Mammary epithelial cell (primary cell): ENCODE measurements at regions of chr1 and their contacts with region 1.

Region 1: DNA sequence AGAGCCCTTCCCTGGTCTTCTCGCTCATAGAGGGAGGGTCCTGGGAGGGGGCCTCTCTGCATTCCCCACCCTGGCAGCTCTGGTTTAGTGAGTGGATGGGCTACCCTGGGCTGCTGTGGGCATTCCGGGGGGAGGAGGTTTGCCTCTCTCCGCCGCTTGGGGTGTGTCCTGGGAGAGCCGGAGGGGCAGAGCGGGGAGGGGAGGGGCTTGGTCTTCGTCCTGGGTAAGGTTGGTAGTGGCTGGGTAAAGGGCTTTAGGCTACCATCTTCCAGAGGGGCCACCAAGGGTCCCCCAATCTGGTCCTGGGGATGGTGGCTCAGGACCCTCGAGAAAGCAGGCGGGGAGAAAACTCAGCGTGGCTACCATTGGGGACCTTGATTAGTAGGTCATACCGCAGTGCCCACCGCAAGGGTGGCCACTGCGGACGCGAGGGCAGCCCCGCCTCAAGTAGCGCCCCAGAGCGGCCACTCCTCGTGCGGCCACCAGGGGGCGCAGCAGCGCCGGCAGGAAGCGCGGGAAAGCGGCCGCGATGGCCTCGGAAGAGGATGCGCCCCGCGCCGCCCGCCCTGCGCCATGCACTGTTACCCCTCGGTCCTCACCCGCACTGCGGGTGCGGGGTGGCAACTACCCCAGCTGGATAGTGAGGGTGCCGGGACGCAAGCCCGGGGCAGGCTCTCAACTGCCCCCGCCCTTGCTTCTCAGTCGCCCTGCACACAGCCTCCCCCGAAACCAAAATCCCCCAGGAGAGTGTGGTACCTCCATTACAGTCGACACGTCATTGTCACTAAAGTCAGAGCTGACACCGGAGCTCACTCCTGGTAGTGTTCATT is 44.1 kb upstream of the SLC25A33 start:
- DNase-seq: peak; percentile 14
- H3K4me3 ChIP-seq: no peak overlapping the region
- H3K27ac ChIP-seq: no peak overlapping the region
- H3K4me1 ChIP-seq: no peaks in the 10 kb centered on the region
- H3K27me3 ChIP-seq: no peaks in the 10 kb centered on the region
- CTCF ChIP-seq: peak; percentile 54 to 91

Region 2: DNA sequence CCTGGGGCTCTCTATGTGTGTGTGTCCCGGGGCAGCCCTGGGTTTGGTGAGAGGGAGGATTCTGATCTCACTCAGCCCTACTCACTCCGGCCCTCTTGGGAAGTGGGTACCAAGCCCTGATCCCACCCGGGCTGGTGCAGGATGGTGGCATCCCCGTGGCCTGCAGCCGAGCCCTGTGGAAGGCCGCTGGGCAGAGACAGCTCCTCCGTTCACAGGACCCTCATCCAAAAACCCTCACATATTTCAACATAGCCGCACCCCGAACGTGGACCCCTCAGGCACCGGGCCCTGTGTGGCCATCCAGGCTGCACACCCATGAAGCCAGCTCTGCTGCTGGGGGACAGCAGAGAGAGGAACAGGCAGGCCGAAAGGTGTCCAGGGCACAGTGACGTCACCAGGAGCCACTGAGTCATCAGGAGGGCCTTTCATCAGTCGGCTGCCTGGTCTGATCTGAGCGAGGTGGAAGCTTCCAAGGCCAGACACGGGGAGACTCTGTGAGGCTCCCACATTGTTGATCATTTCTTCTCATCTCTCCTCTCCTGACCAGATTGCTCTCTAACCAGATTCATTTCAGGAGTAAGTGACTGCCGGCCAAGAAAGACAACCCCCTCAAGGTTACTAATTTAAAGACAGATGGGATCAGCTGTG is 350.0 kb before region 1 on chr1:
- CTCF ChIA-PET with region 1: interaction called, 3 read pairs
- dilution Hi-C with region 1: no loop called
- in situ Hi-C with region 1: no loop called
- intact Hi-C with region 1: loop called (anchors 2 kb)
- DNase-seq: peak; percentile 23
- H3K4me3 ChIP-seq: no peak overlapping the region
- H3K27ac ChIP-seq: no peak overlapping the region
- H3K4me1 ChIP-seq: peaks cover 5% of the 10 kb centered on the region
- H3K27me3 ChIP-seq: no peaks in the 10 kb centered on the region
- CTCF ChIP-seq: no peak

Region 3: DNA sequence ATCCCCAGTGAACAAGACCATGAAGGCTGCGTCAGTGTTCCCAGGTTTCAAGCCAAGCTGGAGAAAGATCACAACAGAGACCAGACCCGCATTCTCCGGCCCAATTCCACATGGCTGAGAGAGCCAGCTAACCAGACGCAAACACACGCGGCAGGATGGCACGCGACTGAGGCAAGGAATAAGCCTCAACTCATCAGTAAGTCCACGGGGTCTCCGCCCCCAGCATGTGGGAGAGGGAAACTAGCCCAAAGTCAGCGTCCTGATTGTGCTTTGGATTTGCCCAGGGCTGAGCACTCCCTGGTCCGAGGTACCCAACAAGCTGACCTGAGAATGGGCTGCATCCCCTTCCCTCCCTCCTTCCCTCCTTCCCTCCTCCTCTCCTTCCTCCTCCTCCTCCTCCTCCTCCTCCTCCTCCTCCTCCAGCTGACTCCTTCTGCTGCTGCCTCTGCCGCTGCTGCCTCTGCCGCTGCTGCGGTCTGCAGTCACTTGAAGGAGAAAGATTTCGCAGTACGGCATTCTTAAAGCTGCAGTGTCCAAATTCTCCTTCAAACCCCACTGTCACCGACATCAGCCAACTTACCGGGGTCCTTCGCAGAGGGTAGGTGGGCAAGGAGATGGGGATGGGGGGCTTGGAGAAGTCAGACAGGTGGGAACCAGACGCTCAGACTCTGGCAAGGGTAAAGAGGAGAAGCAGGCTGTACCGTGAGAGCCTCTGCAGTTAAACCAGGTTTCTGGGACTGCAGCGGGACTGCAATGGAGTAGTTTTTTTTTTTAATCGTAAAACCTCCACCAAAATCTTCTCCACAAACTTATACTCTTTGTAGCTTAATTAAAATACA is 293.5 kb before region 1 on chr1:
- CTCF ChIA-PET with region 1: no interaction called
- dilution Hi-C with region 1: no loop called
- in situ Hi-C with region 1: no loop called
- intact Hi-C with region 1: loop called (anchors 5 kb)
- DNase-seq: peak; percentile 41
- H3K4me3 ChIP-seq: peak overlapping the region; percentile 54 to 61 (median 54)
- H3K27ac ChIP-seq: no peak overlapping the region
- H3K4me1 ChIP-seq: peaks cover 54% of the 10 kb centered on the region
- H3K27me3 ChIP-seq: no peaks in the 10 kb centered on the region
- CTCF ChIP-seq: no peak

Region 4: GRCh38 chr1:9292361-9293240 is 202.5 kb before region 1 on chr1 and contains the start of gene SPSB1:
- CTCF ChIA-PET with region 1: interaction called, 7 read pairs
- dilution Hi-C with region 1: no loop called
- in situ Hi-C with region 1: loop called in 1 of 2 experiments (anchors 5 kb)
- intact Hi-C with region 1: loop called (anchors 1 kb)
- DNase-seq: peak; percentile 73
- H3K4me3 ChIP-seq: peak within 1 kb of the TSS; percentile 53 to 96 (median 74)
- H3K27ac ChIP-seq: peak within 1 kb of the TSS; percentile 63
- H3K4me1 ChIP-seq: peaks cover 32% of the 10 kb centered on the region
- H3K27me3 ChIP-seq: no peaks in the 10 kb centered on the region
- CTCF ChIP-seq: no peak
- total RNA-seq, gene SPSB1: 18.2 to 56.7 TPM

Region 5: DNA sequence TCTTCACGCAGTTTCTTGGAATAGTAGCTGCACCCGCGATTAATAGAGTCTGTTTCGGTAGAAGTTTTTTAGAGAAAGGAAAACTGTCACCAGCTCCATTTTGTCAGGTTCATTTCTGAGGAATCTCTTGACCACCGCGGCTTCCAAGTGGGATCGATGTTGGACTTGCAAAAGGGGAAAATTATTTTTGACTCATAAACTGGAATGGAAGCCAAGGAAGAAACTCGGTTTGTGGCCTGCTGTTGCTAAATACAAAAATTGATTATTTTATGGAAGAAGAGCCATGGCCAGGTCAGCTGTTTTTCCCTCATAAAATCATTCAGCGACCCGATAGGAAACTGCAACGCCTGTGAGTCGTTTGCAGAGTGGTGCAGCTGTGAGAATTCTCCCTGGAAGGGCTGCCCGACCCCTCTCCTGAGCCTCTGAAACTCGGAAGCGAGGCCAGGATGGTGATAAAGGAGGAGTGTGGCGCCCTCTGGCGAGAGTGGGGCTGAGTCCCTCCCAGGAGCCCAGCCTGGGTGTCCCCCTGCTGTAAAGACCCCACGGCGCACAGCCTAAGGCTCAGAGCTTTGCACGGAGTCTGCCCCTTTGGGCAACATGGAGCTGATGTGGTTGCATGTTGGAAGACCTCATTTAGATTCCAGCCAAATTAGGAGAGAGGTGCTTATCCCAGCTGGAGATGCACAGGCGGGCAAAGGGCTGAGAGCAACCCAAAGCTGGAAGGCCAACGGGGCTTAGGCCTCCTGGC is 39.5 kb before region 1 on chr1:
- CTCF ChIA-PET with region 1: no interaction called
- dilution Hi-C with region 1: no loop called
- in situ Hi-C with region 1: no loop called
- intact Hi-C with region 1: loop called (anchors 1 kb)
- DNase-seq: peak; percentile 24
- H3K4me3 ChIP-seq: no peak overlapping the region
- H3K27ac ChIP-seq: no peak overlapping the region
- H3K4me1 ChIP-seq: peaks cover 4% of the 10 kb centered on the region
- H3K27me3 ChIP-seq: no peaks in the 10 kb centered on the region
- CTCF ChIP-seq: peak; percentile 61 to 91

Region 6: DNA sequence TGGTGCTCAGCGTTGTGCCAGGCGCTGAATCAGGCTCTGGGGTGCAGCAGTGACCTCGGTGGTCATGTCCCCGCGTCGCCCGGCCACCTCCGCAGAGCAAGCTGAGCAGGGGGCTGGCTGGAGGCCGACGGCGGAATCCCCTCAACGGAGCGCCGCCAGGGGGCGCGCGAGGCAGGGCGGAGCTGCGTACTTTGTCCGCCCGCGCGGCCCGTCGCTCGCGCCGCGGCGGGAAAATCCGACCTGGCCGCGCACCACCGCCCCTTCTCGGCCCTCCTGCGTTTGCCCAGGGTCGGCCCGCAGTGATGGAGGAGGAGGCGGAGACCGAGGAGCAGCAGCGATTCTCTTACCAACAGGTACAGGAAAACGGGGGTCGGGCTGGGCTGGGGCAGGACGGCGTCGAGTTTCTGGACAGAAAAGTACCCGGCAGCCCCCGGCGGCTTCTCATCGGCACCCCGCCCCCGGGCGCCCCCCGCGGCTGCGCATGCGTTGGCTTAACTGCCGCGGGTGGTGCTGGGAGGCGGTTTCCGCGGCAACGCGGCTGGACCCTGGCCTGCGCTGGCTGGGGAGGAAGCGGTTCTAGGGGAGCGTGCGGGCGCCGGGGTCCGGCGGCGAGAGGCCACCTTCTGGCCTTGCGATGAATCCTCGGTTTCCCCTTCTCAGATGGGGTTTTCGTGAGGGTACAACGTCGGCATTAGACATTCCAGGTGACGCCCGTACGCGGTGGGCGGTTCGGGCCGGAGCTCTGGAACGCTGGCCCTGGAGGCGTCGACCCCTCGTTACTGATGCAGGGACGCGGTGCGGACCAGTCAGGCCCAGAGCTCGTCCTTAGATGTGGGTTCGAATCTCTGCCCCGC is 935.3 kb after region 1 on chr1 and contains the start of gene CENPS:
- CTCF ChIA-PET with region 1: no interaction called
- dilution Hi-C with region 1: no loop called
- in situ Hi-C with region 1: no loop called
- intact Hi-C with region 1: loop called (anchors 5 kb)
- DNase-seq: peak; percentile 87
- H3K4me3 ChIP-seq: peak within 1 kb of the TSS; percentile 71 to 96 (median 87)
- H3K27ac ChIP-seq: peak within 1 kb of the TSS; percentile 91
- H3K4me1 ChIP-seq: peaks cover 9% of the 10 kb centered on the region
- H3K27me3 ChIP-seq: no peaks in the 10 kb centered on the region
- CTCF ChIP-seq: peak; percentile 65 to 89
- total RNA-seq, gene CENPS: 9.7 to 24.1 TPM